Activated naive CD8-positive, alpha-beta T cell treated with anti-CD3 and anti-CD28 coated beads, Interleukin-2, amount 10 ng/mL, durations not matched to agents 7 days and 5 days (primary cell): ENCODE measurements at regions of chr1 and their contacts with region 1.

Region 1: DNA sequence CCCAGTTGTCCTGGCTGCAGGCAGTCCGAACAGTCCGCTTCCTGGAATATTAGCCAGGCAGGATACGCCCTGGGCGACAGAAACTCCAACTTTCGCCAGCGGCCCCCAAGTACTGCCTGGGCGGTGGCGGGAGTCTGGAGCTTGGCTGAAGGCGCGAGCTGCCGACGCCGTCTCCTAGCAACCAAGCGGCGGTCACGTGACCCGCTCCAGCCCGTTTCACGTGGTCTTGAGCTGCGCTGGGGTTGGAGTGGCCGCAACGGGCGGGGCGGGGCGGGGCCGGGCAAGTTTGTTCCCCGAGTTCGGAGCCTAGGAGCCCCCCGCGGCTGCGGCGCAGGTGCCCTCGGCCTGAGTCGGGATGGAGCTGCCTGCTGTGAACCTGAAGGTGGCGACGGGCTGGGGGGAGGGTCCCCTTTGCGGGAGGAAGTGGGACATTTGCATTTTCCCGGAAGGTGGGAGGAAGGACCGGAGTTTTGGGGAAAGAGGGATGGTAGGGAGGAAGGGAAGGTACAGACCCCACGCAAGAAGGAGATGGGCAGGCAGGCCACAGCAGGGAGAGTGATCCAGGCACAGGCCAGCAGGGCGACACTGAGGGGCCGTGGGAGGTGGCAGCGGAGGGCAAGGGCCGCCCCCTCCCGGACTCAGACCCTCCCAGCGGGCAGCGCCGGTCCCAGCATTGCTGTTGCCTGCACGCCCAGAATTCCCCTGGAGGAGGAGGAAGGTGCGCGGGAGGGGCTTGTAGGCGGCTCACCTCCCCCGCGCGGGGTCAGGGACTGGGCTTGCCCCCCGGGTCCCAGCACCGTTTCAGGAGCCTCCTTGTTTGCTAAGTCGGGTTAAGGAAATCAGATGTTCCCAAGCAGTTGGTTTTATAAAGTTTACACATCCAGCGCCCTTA is at the start of gene AGTRAP:
- DNase-seq: peak; percentile 88
- ATAC-seq: peak; percentile 71
- H3K4me3 Mint-ChIP-seq: peak within 1 kb of the TSS; percentile 99
- H3K27ac Mint-ChIP-seq: peak within 1 kb of the TSS; percentile 98
- H3K4me1 Mint-ChIP-seq: peaks cover 64% of the 10 kb centered on the region
- H3K27me3 Mint-ChIP-seq: no peaks in the 10 kb centered on the region
- total RNA-seq, gene AGTRAP: 53.8 to 56.4 TPM

Region 2: GRCh38 chr1:11650331-11650991 is 85.6 kb before region 1 on chr1:
- POLR2A ChIA-PET with region 1: interaction called, 11 read pairs
- DNase-seq: peak; percentile 88
- ATAC-seq: peak; percentile 85
- H3K4me3 Mint-ChIP-seq: peak overlapping the region; percentile 61
- H3K27ac Mint-ChIP-seq: peak overlapping the region; percentile 65
- H3K4me1 Mint-ChIP-seq: peaks cover 18% of the 10 kb centered on the region
- H3K27me3 Mint-ChIP-seq: no peaks in the 10 kb centered on the region

Region 3: DNA sequence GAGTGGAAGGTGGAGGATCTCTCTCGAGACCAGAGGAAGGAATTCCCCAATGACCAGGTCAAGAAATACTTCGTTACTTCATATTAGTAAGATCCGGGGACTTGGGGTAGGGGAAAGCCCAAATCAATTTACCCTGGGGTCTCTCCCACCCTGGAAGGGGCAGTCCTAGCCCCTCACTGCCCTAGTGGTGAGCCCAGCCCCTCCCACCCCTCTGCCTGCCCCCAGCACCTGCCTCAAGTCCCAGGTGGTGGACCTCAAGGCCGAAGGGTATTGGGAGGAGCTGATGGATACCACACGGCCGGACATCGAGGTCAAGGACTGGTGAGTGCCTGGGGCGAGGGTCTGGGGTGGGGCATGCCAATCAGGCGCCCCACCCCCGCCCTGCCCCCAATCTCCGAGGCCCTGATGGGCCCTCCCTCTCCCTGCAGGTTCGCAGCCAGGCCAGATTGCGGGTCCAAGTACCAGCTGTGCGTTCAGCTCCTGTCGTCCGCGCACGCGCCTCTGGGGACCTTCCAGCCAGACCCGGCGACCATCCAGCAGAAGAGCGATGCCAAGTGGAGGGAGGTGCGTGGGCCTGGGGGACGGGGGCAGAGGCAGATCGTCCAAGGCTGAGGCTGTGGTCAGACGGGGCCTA is 77.7 kb before region 1 on chr1:
- POLR2A ChIA-PET with region 1: interaction called, 12 read pairs
- DNase-seq: no peak
- ATAC-seq: no peak
- H3K4me3 Mint-ChIP-seq: no peak overlapping the region
- H3K27ac Mint-ChIP-seq: no peak overlapping the region
- H3K4me1 Mint-ChIP-seq: peaks cover 4% of the 10 kb centered on the region
- H3K27me3 Mint-ChIP-seq: no peaks in the 10 kb centered on the region

Region 4: DNA sequence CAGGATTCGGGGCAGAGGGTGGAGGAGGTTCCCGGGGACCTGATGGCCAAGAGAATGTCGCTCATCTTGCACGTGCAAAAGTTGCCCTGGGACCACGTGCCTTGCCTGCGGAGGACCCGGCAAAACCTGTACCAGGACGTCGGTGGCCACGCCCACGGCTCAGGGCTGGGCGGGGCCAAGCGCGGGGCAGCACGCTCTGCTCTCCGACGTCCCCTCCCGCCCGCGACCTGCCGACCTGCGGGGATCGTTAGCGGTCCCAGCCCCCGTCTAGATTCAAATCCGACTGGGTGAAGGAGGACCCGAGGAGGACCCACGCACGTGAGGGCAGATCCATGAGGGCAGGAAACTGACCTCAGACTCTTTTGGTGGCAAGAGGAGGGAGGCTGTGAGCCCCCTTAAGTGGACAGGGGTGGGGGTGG is 25.9 kb after region 1 on chr1 and contains the start of gene C1orf167:
- POLR2A ChIA-PET with region 1: no interaction called
- DNase-seq: peak; percentile 64
- ATAC-seq: peak; percentile 73
- H3K4me3 Mint-ChIP-seq: no peak within 1 kb of the TSS
- H3K27ac Mint-ChIP-seq: peak within 1 kb of the TSS; percentile 8
- H3K4me1 Mint-ChIP-seq: peaks cover 2% of the 10 kb centered on the region
- H3K27me3 Mint-ChIP-seq: peaks cover 30% of the 10 kb centered on the region
- total RNA-seq, gene C1orf167: not detected